ENCODE measurements at regions of chr10 and their contacts with region 1.

Region 1: GRCh38 chr10:110007701-110008517 is at the start of gene ADD3:
- DNase-seq: peak; percentile 94
- ATAC-seq: peak; percentile 85
- H3K4me3 Mint-ChIP-seq: no peak within 1 kb of the TSS
- H3K27ac Mint-ChIP-seq: no peak within 1 kb of the TSS
- H3K4me1 Mint-ChIP-seq: peaks cover 54% of the 10 kb centered on the region
- H3K27me3 Mint-ChIP-seq: no peaks in the 10 kb centered on the region
- CTCF ChIP-seq: no peak
- total RNA-seq, gene ADD3: 85.8 and 95.3 TPM in 2 replicates

Region 2: GRCh38 chr10:109866168-109866994 is 141.5 kb before region 1 on chr10:
- CTCF ChIA-PET with region 1: no interaction called
- POLR2A ChIA-PET with region 1: no interaction called
- intact Hi-C with region 1: no loop called
- DNase-seq: no peak
- ATAC-seq: no peak
- H3K4me3 Mint-ChIP-seq: no peak overlapping the region
- H3K27ac Mint-ChIP-seq: no peak overlapping the region
- H3K4me1 Mint-ChIP-seq: no peaks in the 10 kb centered on the region
- H3K27me3 Mint-ChIP-seq: no peaks in the 10 kb centered on the region
- CTCF ChIP-seq: no peak

Region 3: GRCh38 chr10:109922976-109923921 is 84.7 kb before region 1 on chr10 and contains the start of gene XPNPEP1:
- CTCF ChIA-PET with region 1: no interaction called
- POLR2A ChIA-PET with region 1: interaction called, 5 read pairs
- intact Hi-C with region 1: loop called (anchors 1 kb)
- DNase-seq: peak; percentile 85
- ATAC-seq: peak; percentile 94
- H3K4me3 Mint-ChIP-seq: peak within 1 kb of the TSS; percentile 88
- H3K27ac Mint-ChIP-seq: peak within 1 kb of the TSS; percentile 81
- H3K4me1 Mint-ChIP-seq: peaks cover 36% of the 10 kb centered on the region
- H3K27me3 Mint-ChIP-seq: peaks cover 2% of the 10 kb centered on the region
- CTCF ChIP-seq: no peak
- total RNA-seq, gene XPNPEP1: 53.5 and 70.6 TPM in 2 replicates

Region 4: GRCh38 chr10:110036640-110037039 is 28.7 kb after region 1 on chr10:
- CTCF ChIA-PET with region 1: no interaction called
- POLR2A ChIA-PET with region 1: interaction called, 9 read pairs
- intact Hi-C with region 1: loop called (anchors 2 kb)
- DNase-seq: no peak
- ATAC-seq: peak; percentile 25
- H3K4me3 Mint-ChIP-seq: peak overlapping the region; percentile 57
- H3K27ac Mint-ChIP-seq: peak overlapping the region; percentile 11
- H3K4me1 Mint-ChIP-seq: peaks cover 73% of the 10 kb centered on the region
- H3K27me3 Mint-ChIP-seq: no peaks in the 10 kb centered on the region
- CTCF ChIP-seq: no peak

Region 5: DNA sequence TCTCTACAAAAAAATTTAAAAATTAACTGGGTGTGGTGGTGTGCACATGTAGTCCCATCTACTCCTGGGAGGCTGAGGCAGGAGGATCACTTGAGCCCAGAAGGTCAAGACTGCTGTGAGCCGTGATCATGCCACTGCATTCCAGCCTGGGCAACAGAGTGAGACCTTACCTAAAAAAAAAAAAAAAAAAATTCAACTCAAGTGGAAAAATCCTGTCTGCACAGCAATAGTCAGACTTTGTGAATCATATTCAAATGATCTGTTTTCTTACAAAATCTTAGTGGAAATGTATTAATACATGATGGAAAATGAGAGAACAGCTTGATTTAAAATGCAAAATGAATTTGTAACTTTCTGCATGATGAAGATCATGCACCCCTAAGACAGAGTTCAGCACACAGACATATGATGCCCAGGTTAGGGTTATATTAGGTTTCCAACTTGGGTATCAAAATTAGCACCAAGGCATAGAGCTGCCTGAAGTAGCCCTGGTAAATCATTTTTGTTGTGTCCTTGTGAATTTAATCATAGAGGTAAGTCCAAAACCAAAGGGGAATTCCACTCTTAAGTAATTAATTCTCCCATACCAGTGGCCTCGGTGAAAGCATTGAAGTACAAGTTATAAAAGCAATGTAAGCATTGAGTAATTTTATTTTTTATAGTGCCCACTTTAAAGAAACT is 93.7 kb after region 1 on chr10:
- CTCF ChIA-PET with region 1: no interaction called
- POLR2A ChIA-PET with region 1: interaction called, 5 read pairs
- intact Hi-C with region 1: loop called (anchors 2 kb)
- DNase-seq: no peak
- ATAC-seq: peak; percentile 55
- H3K4me3 Mint-ChIP-seq: no peak overlapping the region
- H3K27ac Mint-ChIP-seq: peak overlapping the region; percentile 74
- H3K4me1 Mint-ChIP-seq: peaks cover 42% of the 10 kb centered on the region
- H3K27me3 Mint-ChIP-seq: no peaks in the 10 kb centered on the region
- CTCF ChIP-seq: no peak

Region 6: DNA sequence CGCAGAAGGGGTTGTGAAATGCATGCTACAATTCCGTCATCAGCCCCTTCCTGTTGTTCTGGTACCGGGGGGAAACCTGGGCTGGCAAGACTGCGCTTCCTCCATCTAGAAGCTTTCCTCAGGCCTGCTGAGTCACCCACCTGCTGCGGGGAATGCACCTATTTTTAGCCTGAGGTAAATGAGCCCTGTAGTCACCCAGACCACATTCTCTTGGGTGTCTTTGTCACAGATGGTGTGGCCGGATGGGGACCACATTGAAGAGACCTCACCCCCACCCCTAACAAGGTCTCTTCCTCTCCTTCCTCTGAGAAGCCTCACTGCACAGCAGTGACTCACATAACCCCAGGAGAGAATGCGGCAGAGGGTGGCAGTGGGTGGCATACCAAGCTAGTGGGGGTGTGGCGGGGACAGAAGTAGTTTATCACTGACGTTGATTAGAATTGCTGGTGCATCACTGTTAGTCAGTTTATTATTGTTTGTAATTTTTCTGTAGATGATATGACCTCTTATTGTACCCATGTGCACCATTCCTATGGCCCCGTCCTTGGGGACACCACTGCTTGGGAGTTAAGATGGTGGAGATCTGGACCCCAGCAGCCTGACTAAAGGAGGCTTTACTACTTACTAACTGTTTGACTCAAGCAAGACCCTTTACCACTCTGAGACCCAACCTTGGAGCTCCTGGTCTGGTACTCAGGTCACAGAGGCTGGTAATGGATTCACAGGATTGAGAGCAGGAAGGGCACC is 406.8 kb after region 1 on chr10:
- CTCF ChIA-PET with region 1: no interaction called
- POLR2A ChIA-PET with region 1: no interaction called
- intact Hi-C with region 1: loop called (anchors 5 kb)
- DNase-seq: peak; percentile 72
- ATAC-seq: peak; percentile 89
- H3K4me3 Mint-ChIP-seq: peak overlapping the region; percentile 50
- H3K27ac Mint-ChIP-seq: peak overlapping the region; percentile 65
- H3K4me1 Mint-ChIP-seq: peaks cover 71% of the 10 kb centered on the region
- H3K27me3 Mint-ChIP-seq: peaks cover 6% of the 10 kb centered on the region
- CTCF ChIP-seq: no peak

Region 7: DNA sequence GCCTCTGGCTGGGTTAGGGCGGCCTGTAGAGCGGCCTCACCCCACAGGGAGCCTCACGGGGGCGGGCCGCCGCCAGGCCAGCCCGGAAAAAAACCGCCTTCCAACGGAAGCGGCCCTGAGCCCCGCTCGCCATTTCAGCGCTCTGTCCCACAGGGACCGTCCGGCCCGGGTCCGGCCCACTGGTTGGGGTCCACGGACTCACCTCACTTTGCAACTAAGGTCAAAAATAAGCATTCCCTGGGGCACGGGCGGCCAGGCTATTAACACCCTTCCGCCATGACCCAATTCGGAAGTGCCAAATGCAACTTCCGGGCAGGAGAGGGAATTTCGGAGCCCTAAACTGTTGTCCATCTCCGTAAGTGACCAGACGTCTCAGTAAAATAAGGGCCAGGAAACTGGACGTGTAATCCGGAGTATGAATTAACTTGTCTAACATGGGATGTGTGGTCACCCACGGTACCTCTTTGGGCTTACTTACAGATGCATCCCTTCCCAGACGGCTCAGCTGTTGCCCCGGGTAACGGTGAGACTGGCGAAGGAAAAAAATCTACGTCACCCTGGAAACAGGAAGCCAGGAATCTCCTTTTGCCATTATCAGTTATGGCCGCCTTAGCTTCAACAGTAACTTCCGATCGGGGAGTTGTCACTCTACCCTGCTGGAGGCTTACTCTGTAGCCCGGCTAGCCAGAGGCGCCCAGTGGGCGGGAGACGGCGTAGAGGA is 910.9 kb after region 1 on chr10 and contains the start of gene BBIP1:
- CTCF ChIA-PET with region 1: no interaction called
- POLR2A ChIA-PET with region 1: no interaction called
- intact Hi-C with region 1: loop called (anchors 2 kb)
- DNase-seq: peak; percentile 89
- ATAC-seq: peak; percentile 84
- H3K4me3 Mint-ChIP-seq: peak within 1 kb of the TSS; percentile 99
- H3K27ac Mint-ChIP-seq: peak within 1 kb of the TSS; percentile 99
- H3K4me1 Mint-ChIP-seq: peaks cover 51% of the 10 kb centered on the region
- H3K27me3 Mint-ChIP-seq: no peaks in the 10 kb centered on the region
- CTCF ChIP-seq: no peak
- total RNA-seq, gene BBIP1: 28.4 and 29.0 TPM in 2 replicates

Measured in activated B cell treated with CpG ODN at 0.5 μM for 24 hours (primary cell).